ENCODE measurements at regions of chr19 and their contacts with region 1.

Region 1: GRCh38 chr19:5775668-5776309 is 8.8 kb downstream of the PRR22 start:
- DNase-seq: peak; percentile 65
- H3K4me3 ChIP-seq: no peak overlapping the region
- H3K27me3 ChIP-seq: no peaks in the 10 kb centered on the region
- CTCF ChIP-seq: no peak

Region 2: DNA sequence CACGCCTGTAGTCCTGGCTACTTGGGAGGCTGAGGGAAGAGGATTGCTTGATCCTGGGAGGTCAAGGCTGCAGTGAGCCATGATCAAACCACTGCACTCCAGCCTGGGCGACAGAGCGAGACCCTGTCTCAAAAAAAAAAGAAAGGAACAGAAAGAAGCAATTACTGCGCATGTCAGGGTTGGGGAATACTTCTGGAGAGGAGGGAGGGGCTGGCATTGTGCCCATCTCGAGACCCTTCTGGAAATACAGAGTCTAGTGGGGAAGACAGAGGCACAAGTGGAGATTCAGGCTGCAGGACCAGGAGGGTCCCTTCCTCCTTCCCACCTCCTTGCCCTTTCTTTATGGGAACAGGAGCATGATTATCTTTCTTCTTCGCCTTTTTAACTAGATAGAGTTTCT is 22.0 kb before region 1 on chr19:
- CTCF ChIA-PET with region 1: no interaction called
- POLR2A ChIA-PET with region 1: interaction called, 10 read pairs
- DNase-seq: no peak
- H3K4me3 ChIP-seq: no peak overlapping the region
- H3K27me3 ChIP-seq: no peaks in the 10 kb centered on the region
- CTCF ChIP-seq: no peak

Region 3: DNA sequence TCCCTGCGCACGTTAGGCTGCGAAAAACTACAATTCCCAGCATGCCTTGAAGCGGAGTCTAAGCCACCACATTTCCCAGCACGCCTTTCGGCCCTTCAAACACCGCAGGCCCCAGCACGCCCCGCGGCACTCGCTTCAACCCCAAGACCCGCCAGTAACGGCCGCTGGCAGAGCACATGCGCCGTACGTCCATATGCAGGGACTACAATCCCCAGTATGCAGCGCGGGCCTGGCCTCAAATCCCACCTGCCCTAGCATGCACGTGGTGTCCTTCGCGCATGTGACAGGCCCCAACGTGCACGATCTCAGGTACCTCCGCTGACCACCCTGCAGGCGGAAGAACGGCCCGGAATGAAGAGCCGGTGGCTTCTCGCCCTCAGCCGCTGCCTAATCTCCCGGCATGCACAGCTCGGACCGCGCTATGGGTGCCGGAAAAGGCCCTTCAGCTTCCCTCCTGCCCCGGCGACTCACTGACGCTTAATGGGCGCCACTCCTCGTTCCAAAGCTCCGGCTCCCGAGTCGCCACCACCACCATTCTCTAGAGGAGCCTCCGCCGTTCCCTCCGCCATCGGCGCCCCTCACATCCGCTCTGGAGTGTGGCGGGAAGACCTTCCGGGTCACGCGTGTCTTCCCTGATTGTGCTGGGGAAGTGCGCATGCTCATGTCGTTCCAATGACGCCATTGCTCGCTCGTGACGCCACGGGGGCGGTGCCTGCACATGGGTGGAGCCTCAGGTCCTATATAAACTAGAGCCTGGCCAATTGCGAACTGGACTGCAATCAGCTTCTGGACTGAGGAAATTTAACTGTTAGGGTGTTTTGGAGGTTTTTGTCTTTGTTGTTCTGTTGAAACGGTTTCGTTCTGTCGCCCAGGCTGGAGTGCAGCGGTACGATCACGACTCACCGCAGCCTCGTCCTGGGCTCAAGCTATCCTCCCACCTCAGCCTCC is 15.1 kb after region 1 on chr19 and contains the start of gene DUS3L:
- CTCF ChIA-PET with region 1: interaction called, 32 read pairs
- POLR2A ChIA-PET with region 1: interaction called, 14 read pairs
- DNase-seq: peak; percentile 94
- H3K4me3 ChIP-seq: peak within 1 kb of the TSS; percentile 71
- H3K27me3 ChIP-seq: no peaks in the 10 kb centered on the region
- CTCF ChIP-seq: no peak
- polyA plus RNA-seq, gene DUS3L: 9.9 and 13.7 TPM in 2 replicates

Measured in BJ (cell line).